IMR-90 (cell line): ENCODE measurements at regions of chr6 and their contacts with region 1.

Region 1: DNA sequence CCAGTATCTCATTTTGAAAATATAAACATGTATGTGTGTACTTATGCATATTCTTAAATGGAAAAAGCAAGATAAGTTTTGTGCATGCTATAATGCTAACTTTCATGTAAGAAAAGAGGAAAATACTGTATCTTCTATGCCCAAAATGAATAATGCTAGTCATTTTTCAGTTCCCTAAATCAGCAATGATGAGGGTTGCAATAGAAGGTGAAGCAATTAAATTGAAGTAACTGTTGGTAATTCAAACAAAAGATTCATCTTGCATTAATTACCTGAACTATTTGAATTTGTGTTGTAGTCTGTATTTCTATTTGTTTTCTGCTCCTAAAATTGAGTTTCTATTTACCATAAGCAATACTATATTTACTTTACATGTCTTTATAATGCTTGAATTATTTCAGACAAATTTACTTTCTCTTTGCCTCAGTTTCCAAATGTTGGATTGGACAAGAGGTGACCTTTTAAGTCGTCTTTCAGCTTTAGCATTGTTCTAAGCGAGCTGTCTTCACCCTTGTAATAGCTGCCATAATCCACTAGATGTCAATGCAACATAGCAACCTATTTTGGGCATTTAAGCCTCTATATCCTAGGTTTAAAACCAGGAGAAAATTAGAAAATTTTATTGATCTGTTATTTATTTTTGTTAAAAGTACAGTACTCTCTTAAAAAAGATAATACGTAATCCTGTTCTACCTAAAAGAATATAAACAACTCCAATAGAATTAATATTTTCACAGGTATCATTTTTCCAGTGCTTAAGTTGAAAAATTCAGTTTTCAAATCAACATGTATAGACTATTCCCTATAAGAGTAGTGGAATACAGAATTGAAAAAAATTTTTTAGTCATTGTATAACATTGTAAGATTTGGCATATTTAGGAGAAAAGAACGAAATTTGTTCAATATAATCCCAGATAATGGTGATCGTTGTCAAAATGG is 52.3 kb upstream of the IFNGR1 start:
- DNase-seq: peak; percentile 63
- ATAC-seq: peak; percentile 89
- H3K4me3 ChIP-seq: no peak overlapping the region
- H3K27ac ChIP-seq: no peak overlapping the region
- H3K4me1 ChIP-seq: no peaks in the 10 kb centered on the region
- H3K27me3 ChIP-seq: peaks cover 9% of the 10 kb centered on the region
- CTCF ChIP-seq: peak; percentile 91
- POLR2A ChIP-seq: no peak
- RAD21 ChIP-seq: peak; percentile 90

Region 2: GRCh38 chr6:137094411-137095008 is 177.0 kb before region 1 on chr6:
- CTCF ChIA-PET with region 1: no interaction called
- POLR2A ChIA-PET with region 1: no interaction called
- dilution Hi-C with region 1: no loop called
- in situ Hi-C with region 1: no loop called
- intact Hi-C with region 1: loop called (anchors 5 kb)
- DNase-seq: peak; percentile 67
- ATAC-seq: peak; percentile 82
- H3K4me3 ChIP-seq: no peak overlapping the region
- H3K27ac ChIP-seq: no peak overlapping the region
- H3K4me1 ChIP-seq: no peaks in the 10 kb centered on the region
- H3K27me3 ChIP-seq: peaks cover 14% of the 10 kb centered on the region
- CTCF ChIP-seq: peak; percentile 78
- POLR2A ChIP-seq: no peak
- RAD21 ChIP-seq: peak; percentile 78

Region 3: GRCh38 chr6:137323860-137324259 is 52.3 kb after region 1 on chr6:
- CTCF ChIA-PET with region 1: no interaction called
- POLR2A ChIA-PET with region 1: no interaction called
- dilution Hi-C with region 1: no loop called
- in situ Hi-C with region 1: no loop called
- intact Hi-C with region 1: no loop called
- DNase-seq: no peak
- ATAC-seq: no peak
- H3K4me3 ChIP-seq: no peak overlapping the region
- H3K27ac ChIP-seq: no peak overlapping the region
- H3K4me1 ChIP-seq: no peaks in the 10 kb centered on the region
- H3K27me3 ChIP-seq: peaks cover 14% of the 10 kb centered on the region
- CTCF ChIP-seq: no peak
- POLR2A ChIP-seq: no peak
- RAD21 ChIP-seq: no peak